Heart right ventricle (tissue), 16 donors: ENCODE measurements at regions of chr15 and their contacts with region 1.

Region 1: GRCh38 chr15:73697033-73697467 is 12.9 kb downstream of the CD276 start:
- DNase-seq: peak; percentile 80 to 94
- ATAC-seq: peak; percentile 91 to 97 (median 96)
- H3K4me3 ChIP-seq: peak overlapping the region in 1 of 10 donors; percentile 9
- H3K27ac ChIP-seq: peak overlapping the region in 5 of 10 donors; percentile 4 to 54 (median 48)
- H3K4me1 ChIP-seq: peaks cover 20 to 62% (median 50%) of the 10 kb centered on the region in 9 donors
- H3K27me3 ChIP-seq: peaks cover 0 to 20% (median 0%) of the 10 kb centered on the region in 7 donors
- CTCF ChIP-seq: no peak

Region 2: GRCh38 chr15:73284090-73284716 is 412.8 kb before region 1 on chr15:
- intact Hi-C with region 1: loop called in 1 of 10 experiments (anchors 10 kb)
- DNase-seq: no peak
- ATAC-seq: no peak
- H3K4me3 ChIP-seq: no peak overlapping the region
- H3K27ac ChIP-seq: no peak overlapping the region
- H3K4me1 ChIP-seq: peaks cover 0 to 16% (median 5%) of the 10 kb centered on the region in 9 donors
- H3K27me3 ChIP-seq: no peaks in the 10 kb centered on the region
- CTCF ChIP-seq: peak in 6 of 9 donors; percentile 12 to 33 (median 22)

Region 3: DNA sequence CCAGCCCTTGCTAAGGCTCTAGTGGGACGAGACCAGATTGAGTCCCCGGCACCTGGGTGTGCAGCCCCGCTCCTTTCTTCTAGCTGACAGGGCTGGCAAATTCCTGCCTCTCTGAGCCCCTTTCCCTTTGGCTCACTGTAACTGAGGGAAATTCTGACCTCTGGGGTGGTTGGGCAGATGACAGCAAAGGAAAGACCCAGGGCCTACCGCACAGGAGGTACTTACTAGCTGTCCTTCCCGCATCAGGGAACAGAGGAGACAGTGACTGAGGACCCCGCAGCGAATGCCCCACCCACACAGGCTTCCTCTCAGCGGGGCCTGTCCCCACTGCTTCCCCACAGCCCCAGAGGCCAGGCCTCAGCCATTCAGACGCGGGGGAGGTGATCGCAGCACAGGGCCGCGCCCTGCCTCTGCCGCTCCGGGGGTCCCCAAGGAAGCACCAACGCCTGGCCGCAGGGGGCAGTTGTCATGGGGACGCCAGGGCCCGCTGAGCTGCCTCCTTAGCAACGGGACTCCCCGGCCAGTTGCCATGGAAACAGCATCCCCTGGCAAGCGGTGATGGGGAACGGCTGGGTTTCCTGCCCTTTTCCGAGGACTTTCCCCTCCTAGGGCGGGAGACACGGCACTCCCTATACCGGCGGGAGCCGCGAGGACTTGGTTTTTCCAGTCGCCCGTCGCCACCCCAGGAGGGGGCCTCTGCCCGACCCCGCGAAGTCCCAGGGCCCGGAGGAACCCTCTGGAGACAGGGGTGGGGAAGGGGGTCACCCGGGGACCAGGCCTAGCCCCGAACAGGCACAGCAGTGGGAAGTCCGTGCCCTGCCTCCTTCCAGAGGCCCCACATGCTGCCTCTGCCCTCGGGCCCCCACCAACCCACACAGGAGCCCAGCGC is 378.3 kb before region 1 on chr15:
- intact Hi-C with region 1: loop called in 1 of 10 experiments (anchors 10 kb)
- DNase-seq: no peak
- ATAC-seq: peak in 2 of 8 donors; percentile 25 to 48
- H3K4me3 ChIP-seq: no peak overlapping the region
- H3K27ac ChIP-seq: no peak overlapping the region
- H3K4me1 ChIP-seq: no peaks in the 10 kb centered on the region
- H3K27me3 ChIP-seq: peaks cover 0 to 39% (median 25%) of the 10 kb centered on the region in 7 donors
- CTCF ChIP-seq: no peak

Region 4: GRCh38 chr15:73573572-73573971 is 123.5 kb before region 1 on chr15:
- intact Hi-C with region 1: loop called in 6 of 10 experiments (anchors 5 to 10 kb)
- DNase-seq: peak in 1 of 2 donors; percentile 66
- ATAC-seq: peak; percentile 36 to 87 (median 60)
- H3K4me3 ChIP-seq: no peak overlapping the region
- H3K27ac ChIP-seq: peak overlapping the region in 7 of 10 donors; percentile 9 to 32 (median 19)
- H3K4me1 ChIP-seq: peaks cover 3 to 43% (median 24%) of the 10 kb centered on the region in 9 donors
- H3K27me3 ChIP-seq: no peaks in the 10 kb centered on the region
- CTCF ChIP-seq: no peak

Region 5: GRCh38 chr15:73650416-73651126 is 46.5 kb before region 1 on chr15:
- intact Hi-C with region 1: loop called in 1 of 10 experiments (anchors 2 kb)
- DNase-seq: no peak
- ATAC-seq: peak in 2 of 8 donors; percentile 25 to 48
- H3K4me3 ChIP-seq: no peak overlapping the region
- H3K27ac ChIP-seq: peak overlapping the region in 1 of 10 donors; percentile 28
- H3K4me1 ChIP-seq: peaks cover 0 to 11% (median 0%) of the 10 kb centered on the region in 9 donors
- H3K27me3 ChIP-seq: peaks cover 0 to 12% (median 0%) of the 10 kb centered on the region in 7 donors
- CTCF ChIP-seq: no peak

Region 6: DNA sequence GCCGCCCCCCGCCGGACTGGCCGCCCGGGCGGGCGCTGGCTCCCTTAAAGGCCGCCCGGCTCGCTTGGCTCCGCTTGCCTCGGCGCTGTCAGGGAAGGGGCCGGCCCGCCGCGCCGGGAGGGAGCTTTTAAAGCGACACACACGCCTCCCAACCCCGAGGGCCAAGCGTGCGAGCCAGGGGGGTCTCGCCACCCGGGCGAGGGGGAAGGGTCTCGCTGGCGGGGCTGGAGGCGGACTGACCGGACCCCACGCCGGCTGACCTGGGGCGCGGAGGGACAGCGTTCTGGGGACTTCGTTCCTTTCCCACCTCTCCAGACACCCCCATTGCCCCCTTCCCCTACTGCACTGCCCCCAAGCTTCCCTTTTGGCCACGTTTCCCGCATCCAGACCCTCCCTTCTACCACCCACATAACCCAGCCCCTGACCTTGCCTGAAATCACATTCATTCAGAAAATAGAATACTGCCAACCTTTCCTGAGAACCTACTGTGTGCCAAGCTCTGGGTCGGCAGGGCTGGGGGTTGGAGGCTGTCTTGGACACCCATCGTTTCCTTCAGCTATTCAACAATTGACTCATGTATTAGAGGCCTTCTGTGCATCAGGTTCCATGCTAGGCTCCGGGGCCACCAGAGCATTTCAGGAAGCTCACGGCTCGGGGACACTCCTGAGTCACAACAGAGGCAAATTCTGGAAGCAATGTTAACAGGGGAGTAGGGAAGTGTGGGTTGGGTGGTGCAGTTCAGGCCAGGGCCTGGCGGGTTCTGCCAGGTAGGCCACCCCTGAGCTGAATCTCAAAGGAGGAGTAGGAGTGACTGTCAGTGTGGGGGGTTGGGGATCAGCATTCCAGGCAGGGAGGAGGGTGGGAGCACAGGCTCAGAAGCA is 56.4 kb after region 1 on chr15 and contains the start of gene INSYN1:
- intact Hi-C with region 1: no loop called
- DNase-seq: peak; percentile 55 to 67
- ATAC-seq: peak; percentile 59 to 84 (median 70)
- H3K4me3 ChIP-seq: peak within 1 kb of the TSS; percentile 14 to 92 (median 68)
- H3K27ac ChIP-seq: peak within 1 kb of the TSS in 9 of 10 donors; percentile 9 to 70 (median 64)
- H3K4me1 ChIP-seq: peaks cover 4 to 36% (median 18%) of the 10 kb centered on the region in 9 donors
- H3K27me3 ChIP-seq: peaks cover 0 to 63% (median 13%) of the 10 kb centered on the region in 7 donors
- CTCF ChIP-seq: no peak
- total RNA-seq, gene INSYN1: 56.4 to 221 (median 74.9) TPM

Region 7: GRCh38 chr15:73908030-73908821 is 211.2 kb after region 1 on chr15:
- intact Hi-C with region 1: loop called in 2 of 10 experiments (anchors 10 kb)
- DNase-seq: peak; percentile 83 to 86
- ATAC-seq: peak; percentile 91 to 97 (median 96)
- H3K4me3 ChIP-seq: no peak overlapping the region
- H3K27ac ChIP-seq: no peak overlapping the region
- H3K4me1 ChIP-seq: peaks cover 0 to 16% (median 5%) of the 10 kb centered on the region in 9 donors
- H3K27me3 ChIP-seq: no peaks in the 10 kb centered on the region
- CTCF ChIP-seq: peak; percentile 80 to 95 (median 94)

Region 8: DNA sequence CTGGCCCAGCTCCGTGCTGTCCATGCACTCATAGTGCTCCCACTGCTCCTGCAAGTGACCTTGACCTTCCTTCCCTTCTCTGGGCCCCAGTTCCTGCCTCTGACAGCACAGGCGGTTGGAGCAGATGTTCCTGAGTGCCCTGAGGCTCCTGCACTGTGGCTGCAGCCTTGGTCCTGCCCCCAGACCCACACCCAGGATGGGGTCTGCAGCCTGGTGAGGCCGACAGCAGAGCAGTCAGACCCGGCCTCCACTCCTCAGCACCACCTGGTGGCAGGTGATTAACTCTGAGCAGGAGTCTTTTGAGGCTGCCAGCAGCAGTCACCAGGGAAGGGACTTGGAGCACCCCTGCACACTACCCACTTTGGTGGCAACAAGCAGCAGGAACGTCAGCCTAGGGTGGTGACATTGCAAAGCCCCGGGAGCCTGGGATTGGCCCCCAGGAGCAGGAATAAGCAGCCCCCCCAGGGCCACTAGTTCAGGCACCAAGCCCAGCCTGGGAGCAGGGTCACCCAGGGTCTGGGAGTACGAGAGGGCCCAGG is 605.8 kb after region 1 on chr15:
- intact Hi-C with region 1: no loop called
- DNase-seq: peak; percentile 38 to 47
- ATAC-seq: peak; percentile 23 to 74 (median 56)
- H3K4me3 ChIP-seq: no peak overlapping the region
- H3K27ac ChIP-seq: no peak overlapping the region
- H3K4me1 ChIP-seq: peaks cover 0 to 11% (median 0%) of the 10 kb centered on the region in 9 donors
- H3K27me3 ChIP-seq: peaks cover 0 to 71% (median 34%) of the 10 kb centered on the region in 7 donors
- CTCF ChIP-seq: peak; percentile 53 to 76 (median 67)